K562 (cell line): ENCODE measurements at regions of chr10 and their contacts with region 1.

Region 1: GRCh38 chr10:31490858-31491504 is 172.0 kb downstream of the ZEB1 start:
- DNase-seq: peak in 1 of 4 experiments; percentile 31
- ATAC-seq: peak; percentile 58
- H3K4me3 ChIP-seq: no peak overlapping the region
- H3K27ac ChIP-seq: no peak overlapping the region
- H3K4me1 ChIP-seq: no peaks in the 10 kb centered on the region
- H3K27me3 ChIP-seq: no peaks in the 10 kb centered on the region
- CTCF ChIP-seq: peak; percentile 31 to 63 (median 47); a peak in 4 of 6 replicates
- EP300 ChIP-seq: no peak
- POLR2A ChIP-seq: no peak
- RAD21 ChIP-seq: peak in 1 of 2 experiments; percentile 69; a peak in 2 of 4 replicates

Region 2: GRCh38 chr10:30722956-30723620 is 767.9 kb before region 1 on chr10:
- CTCF ChIA-PET with region 1: interaction called, 4 read pairs
- POLR2A ChIA-PET with region 1: no interaction called
- in situ Hi-C with region 1: no loop called
- intact Hi-C with region 1: loop called (anchors 5 kb)
- DNase-seq: no peak
- ATAC-seq: no peak
- H3K4me3 ChIP-seq: no peak overlapping the region
- H3K27ac ChIP-seq: no peak overlapping the region
- H3K4me1 ChIP-seq: no peaks in the 10 kb centered on the region
- H3K27me3 ChIP-seq: peaks cover 6 to 41% of the 10 kb centered on the region in 2 experiments
- CTCF ChIP-seq: no peak
- EP300 ChIP-seq: no peak
- POLR2A ChIP-seq: no peak
- RAD21 ChIP-seq: no peak

Region 3: GRCh38 chr10:31083765-31084184 is 407.2 kb before region 1 on chr10:
- CTCF ChIA-PET with region 1: no interaction called
- POLR2A ChIA-PET with region 1: no interaction called
- in situ Hi-C with region 1: no loop called
- intact Hi-C with region 1: loop called (anchors 1 kb)
- DNase-seq: peak; percentile 21 to 47 (median 29)
- ATAC-seq: peak; percentile 73
- H3K4me3 ChIP-seq: no peak overlapping the region
- H3K27ac ChIP-seq: no peak overlapping the region
- H3K4me1 ChIP-seq: no peaks in the 10 kb centered on the region
- H3K27me3 ChIP-seq: no peaks in the 10 kb centered on the region; a peak in 1 of 5 replicates
- CTCF ChIP-seq: peak; percentile 52 to 67 (median 54)
- EP300 ChIP-seq: no peak
- POLR2A ChIP-seq: no peak
- RAD21 ChIP-seq: peak; percentile 15 to 69; a peak in 2 of 4 replicates

Region 4: GRCh38 chr10:31508882-31509281 is 17.9 kb after region 1 on chr10:
- CTCF ChIA-PET with region 1: no interaction called
- POLR2A ChIA-PET with region 1: no interaction called
- in situ Hi-C with region 1: no loop called
- intact Hi-C with region 1: no loop called
- DNase-seq: no peak
- ATAC-seq: no peak
- H3K4me3 ChIP-seq: no peak overlapping the region
- H3K27ac ChIP-seq: no peak overlapping the region
- H3K4me1 ChIP-seq: no peaks in the 10 kb centered on the region
- H3K27me3 ChIP-seq: no peaks in the 10 kb centered on the region
- CTCF ChIP-seq: no peak
- EP300 ChIP-seq: no peak
- POLR2A ChIP-seq: no peak
- RAD21 ChIP-seq: no peak

Region 5: GRCh38 chr10:31554556-31554955 is 63.6 kb after region 1 on chr10:
- CTCF ChIA-PET with region 1: no interaction called
- POLR2A ChIA-PET with region 1: no interaction called
- in situ Hi-C with region 1: no loop called
- intact Hi-C with region 1: no loop called
- DNase-seq: no peak
- ATAC-seq: no peak
- H3K4me3 ChIP-seq: no peak overlapping the region
- H3K27ac ChIP-seq: no peak overlapping the region
- H3K4me1 ChIP-seq: no peaks in the 10 kb centered on the region
- H3K27me3 ChIP-seq: no peaks in the 10 kb centered on the region
- CTCF ChIP-seq: no peak
- EP300 ChIP-seq: no peak
- POLR2A ChIP-seq: no peak
- RAD21 ChIP-seq: no peak

Region 6: GRCh38 chr10:31677195-31678138 is 186.5 kb after region 1 on chr10:
- CTCF ChIA-PET with region 1: no interaction called
- POLR2A ChIA-PET with region 1: no interaction called
- in situ Hi-C with region 1: no loop called
- intact Hi-C with region 1: no loop called
- DNase-seq: no peak
- ATAC-seq: peak; percentile 40; the same call in 1 of the 3 replicates
- H3K4me3 ChIP-seq: no peak overlapping the region
- H3K27ac ChIP-seq: no peak overlapping the region
- H3K4me1 ChIP-seq: no peaks in the 10 kb centered on the region; a peak in 1 of 5 replicates
- H3K27me3 ChIP-seq: no peaks in the 10 kb centered on the region
- CTCF ChIP-seq: no peak
- EP300 ChIP-seq: no peak
- POLR2A ChIP-seq: no peak
- RAD21 ChIP-seq: no peak

Region 7: DNA sequence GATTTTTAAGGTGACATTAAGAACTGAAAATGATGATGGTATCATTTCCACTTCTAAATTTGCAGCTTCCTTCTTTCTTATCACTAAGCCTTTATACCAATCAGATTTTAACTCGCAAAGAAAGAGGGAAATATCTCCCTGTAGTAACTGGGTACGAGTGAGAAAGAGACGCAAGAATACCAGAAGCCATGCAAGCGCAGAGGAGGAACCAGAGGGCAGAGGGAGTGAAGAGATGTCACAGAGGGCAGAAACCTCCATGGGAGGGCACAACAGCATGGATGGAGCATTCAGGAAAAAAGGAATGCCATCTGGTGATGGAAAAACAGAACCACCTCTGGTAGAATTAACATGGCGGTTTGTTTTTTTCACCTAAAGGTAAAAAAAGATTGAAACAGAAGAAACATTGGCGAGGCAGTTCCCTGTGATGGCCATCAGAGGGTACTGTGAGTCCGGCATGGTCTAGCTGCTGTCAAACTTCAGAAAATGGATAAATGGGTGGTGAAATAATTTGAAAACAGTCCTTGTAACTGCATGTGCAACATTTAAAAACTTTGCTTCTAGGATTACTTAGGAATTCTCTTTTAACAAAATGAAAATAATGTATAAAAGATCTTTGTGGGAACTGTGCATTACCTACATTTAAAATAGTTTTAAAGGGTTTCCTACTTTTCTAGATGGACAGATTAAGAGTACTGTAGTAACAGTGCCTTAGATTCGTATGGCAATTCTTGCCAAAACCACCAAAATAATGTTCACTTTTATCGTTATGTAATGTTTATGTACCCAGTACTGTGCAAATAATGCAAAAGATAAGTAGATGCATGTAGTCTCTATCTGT is 345.8 kb after region 1 on chr10:
- CTCF ChIA-PET with region 1: no interaction called
- POLR2A ChIA-PET with region 1: no interaction called
- in situ Hi-C with region 1: no loop called
- intact Hi-C with region 1: no loop called
- DNase-seq: peak; percentile 25 to 57 (median 32)
- ATAC-seq: peak; percentile 93
- H3K4me3 ChIP-seq: no peak overlapping the region
- H3K27ac ChIP-seq: no peak overlapping the region
- H3K4me1 ChIP-seq: no peaks in the 10 kb centered on the region
- H3K27me3 ChIP-seq: no peaks in the 10 kb centered on the region
- CTCF ChIP-seq: peak; percentile 61 to 83 (median 77)
- EP300 ChIP-seq: no peak
- POLR2A ChIP-seq: no peak
- RAD21 ChIP-seq: peak; percentile 52 to 78